Head of caudate nucleus (tissue), 42 donors: ENCODE measurements at regions of chr11 and their contacts with region 1.

Region 1: GRCh38 chr11:117796872-117797529 is at the start of gene DSCAML1:
- DNase-seq: peak in 39 of 42 donors; percentile 63 to 90 (median 81)

Region 2: GRCh38 chr11:117535261-117535781 is 261.7 kb before region 1 on chr11:
- intact Hi-C with region 1: loop called (anchors 10 kb)
- DNase-seq: peak; percentile 54 to 92 (median 80)

Region 3: GRCh38 chr11:117604336-117604995 is 192.5 kb before region 1 on chr11:
- intact Hi-C with region 1: loop called (anchors 10 kb)
- DNase-seq: peak in 39 of 42 donors; percentile 43 to 83 (median 61)

Region 4: DNA sequence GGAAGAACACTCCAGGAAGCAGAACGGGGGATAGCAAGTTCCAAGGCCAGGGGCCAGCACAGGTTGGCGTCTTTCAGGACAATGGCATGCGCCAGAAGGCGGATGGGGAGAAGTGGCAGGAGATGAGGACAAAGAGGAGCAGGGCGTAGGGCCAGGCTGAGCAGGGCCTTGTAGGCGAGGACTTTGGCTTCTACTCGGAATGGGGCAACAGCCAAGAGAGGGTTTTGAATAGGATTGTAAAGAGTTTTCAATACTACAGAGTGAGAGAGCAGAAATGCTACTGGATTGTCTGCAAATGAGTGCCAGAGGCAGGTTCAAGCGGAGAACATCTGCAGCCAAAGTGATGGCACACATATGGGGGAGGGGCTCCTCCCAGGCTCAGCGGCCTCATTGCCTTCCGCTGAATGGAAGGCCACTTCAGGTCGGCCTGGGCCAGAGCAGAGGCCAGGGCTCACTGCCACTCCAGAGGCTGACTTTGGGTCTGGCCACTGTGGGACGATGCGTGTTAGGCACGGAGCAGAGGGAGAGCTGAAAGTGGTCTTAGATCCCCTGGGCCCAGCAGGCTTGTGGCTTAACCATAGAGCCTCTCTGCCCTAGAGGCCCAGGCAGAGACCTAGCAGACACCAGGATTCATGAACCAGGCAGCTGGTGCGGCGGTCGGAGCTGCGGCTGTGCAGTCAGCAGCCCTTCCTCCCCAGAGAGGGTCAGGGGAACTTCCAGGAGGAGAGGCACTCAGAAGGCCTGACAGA is 118.2 kb before region 1 on chr11:
- intact Hi-C with region 1: loop called (anchors 10 kb)
- DNase-seq: peak; percentile 49 to 92 (median 74)